Activated CD4-positive, alpha-beta T cell treated with anti-CD3 and anti-CD28 coated beads, Interleukin-2, amount 10 ng/mL, durations not matched to agents 24 days and 14 days (primary cell): ENCODE measurements at regions of chr6 and their contacts with region 1.

Region 1: DNA sequence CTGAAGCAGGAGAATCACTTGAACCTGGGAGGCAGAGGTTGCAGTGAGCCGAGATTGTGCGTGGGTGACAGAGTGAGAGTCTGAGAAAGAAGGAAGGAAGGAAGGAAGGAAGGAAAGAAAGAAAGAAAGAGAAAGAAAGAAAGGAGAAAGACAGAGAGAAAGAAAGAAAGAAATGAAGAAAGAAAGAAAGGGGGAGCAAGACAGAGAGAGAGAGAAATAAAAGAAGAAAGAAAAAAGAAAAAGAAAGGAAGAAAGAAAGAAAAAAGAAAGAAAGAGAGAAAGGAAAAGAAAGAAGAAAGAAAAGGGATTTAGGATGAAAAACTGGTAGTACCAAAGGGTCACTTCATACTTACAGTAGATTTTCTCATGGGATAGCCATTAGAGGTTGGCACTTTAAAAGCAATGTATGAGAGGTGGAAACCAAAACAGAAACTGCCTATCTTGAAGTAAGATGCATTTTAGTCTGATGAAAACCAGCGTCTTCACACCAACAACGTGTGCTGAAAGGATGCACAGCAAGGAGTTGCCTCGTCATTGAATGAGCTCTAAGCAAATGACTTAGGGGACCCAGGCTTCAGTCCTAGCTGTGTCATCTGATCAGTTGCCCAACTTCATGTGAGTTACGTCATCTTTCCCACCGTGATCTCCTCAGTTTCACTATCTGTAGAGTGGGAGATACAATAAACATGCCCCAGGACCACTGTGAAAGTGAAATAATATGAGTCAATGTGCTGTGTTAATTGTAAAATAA is 133.9 kb upstream of the NEDD9 start:
- DNase-seq: peak; percentile 86
- H3K4me3 Mint-ChIP-seq: peak overlapping the region; percentile 62
- H3K27ac Mint-ChIP-seq: peak overlapping the region; percentile 86
- H3K4me1 Mint-ChIP-seq: peaks cover 78% of the 10 kb centered on the region
- H3K27me3 Mint-ChIP-seq: no peaks in the 10 kb centered on the region

Region 2: DNA sequence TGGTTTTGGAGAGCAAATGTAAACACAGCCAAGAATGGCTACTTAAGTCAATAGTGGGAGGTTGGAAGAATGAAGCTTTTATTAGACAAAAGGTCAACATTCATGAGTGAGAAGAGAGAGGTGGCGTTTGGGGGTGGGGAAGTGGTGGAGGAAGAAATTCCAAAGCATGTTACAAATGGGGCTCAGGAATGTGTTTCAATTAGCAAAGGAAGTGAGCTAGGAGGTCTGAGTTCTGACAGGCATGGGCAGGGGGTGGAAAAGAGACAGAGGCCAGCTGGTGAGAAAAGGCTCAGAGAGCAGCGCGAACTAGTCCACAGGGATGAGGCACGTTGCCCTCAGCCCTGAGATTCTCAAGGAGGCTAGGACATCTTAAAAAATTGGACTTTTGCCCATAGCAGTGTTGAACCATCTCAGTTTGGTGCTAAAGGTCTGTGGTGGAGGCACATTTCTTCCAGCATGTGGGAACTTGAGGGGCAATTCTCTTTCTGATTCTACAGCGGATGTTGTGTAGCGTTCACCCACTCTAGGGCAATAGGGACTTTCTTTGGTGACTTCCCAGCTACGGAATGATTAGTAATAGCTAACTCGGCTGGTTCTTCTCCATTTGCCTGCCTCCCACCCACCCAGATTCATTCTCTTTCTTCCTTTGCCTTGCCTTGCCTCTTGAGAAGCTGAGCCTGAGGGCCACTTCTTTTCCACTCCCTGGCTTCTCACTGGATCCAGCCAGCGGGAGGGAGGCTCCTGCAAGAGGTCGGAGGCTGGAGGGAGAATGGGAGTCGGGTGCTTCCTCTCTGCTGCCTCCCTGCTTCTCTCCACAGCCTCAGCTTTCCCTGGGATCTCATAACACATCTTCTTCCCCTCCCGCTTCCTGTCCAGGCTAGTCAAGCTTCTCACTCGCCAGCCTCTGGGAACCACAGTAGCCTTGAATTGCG is 88.8 kb before region 1 on chr6:
- intact Hi-C with region 1: loop called (anchors 5 kb)
- DNase-seq: no peak
- H3K4me3 Mint-ChIP-seq: peak overlapping the region; percentile 31
- H3K27ac Mint-ChIP-seq: peak overlapping the region; percentile 89
- H3K4me1 Mint-ChIP-seq: peaks cover 37% of the 10 kb centered on the region
- H3K27me3 Mint-ChIP-seq: no peaks in the 10 kb centered on the region

Region 3: GRCh38 chr6:11324453-11325015 is 41.8 kb before region 1 on chr6:
- intact Hi-C with region 1: loop called (anchors 1 kb)
- DNase-seq: peak; percentile 87
- H3K4me3 Mint-ChIP-seq: peak overlapping the region; percentile 78
- H3K27ac Mint-ChIP-seq: peak overlapping the region; percentile 97
- H3K4me1 Mint-ChIP-seq: peaks cover 75% of the 10 kb centered on the region
- H3K27me3 Mint-ChIP-seq: no peaks in the 10 kb centered on the region

Region 4: DNA sequence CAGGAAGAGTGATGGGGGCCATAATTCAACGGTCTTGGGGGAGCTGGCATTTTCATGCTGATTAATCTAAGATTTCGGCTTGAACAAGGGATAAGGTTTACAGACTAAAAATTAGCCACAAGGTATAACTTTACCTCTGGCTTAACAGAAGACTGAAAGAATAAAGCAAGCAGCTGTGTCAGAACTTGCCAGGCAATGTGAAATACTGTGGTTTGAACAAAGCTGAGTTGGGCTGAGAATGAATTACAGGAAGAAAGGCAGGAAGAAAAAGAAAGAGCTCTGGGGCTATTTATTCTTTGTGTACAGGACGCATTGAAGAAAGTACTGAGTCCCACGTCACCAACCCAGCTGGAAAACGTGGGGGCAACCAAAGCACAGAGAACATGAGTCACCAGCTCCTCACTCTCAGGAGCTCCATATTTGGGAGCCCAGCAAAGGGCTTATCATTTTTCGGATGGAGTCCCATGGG is 12.4 kb before region 1 on chr6:
- intact Hi-C with region 1: loop called (anchors 1 kb)
- DNase-seq: peak; percentile 87
- H3K4me3 Mint-ChIP-seq: peak overlapping the region; percentile 68
- H3K27ac Mint-ChIP-seq: peak overlapping the region; percentile 86
- H3K4me1 Mint-ChIP-seq: peaks cover 73% of the 10 kb centered on the region
- H3K27me3 Mint-ChIP-seq: no peaks in the 10 kb centered on the region

Region 5: DNA sequence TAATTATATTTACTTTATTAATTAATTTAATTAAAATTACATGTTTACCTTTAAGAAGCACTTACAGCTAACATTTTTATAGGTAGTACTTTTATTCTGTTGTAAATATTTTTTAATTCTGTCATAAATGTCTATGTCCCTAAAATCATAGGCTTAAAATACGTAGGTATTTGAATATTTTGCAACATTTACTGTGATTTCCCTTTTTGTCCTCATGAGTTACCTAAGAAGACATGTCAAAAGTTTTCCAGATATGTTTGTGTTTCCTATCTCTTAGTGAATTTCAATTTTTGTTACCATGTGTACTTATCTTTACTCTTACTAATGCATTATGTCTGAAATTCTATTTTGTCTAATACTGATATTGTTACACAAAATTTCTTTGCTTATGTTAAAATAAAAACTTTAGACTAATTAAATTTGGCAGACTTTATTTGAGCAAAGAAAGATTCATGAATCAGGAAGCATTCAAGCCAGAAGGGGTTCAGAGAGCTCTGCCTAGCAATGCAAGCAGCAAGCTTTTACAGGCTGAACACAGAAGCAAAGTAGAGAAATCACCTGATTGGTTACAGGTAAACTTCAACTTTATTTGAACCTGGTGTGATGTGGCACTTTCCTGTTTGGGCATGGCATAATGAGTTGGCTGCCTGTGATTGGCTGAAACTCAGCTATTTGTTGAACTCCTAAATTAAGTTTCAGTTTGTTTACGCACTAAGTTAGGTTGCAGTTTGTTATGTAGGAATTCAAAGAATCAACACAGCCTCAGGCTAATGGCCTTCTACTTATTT is 48.0 kb after region 1 on chr6:
- intact Hi-C with region 1: loop called (anchors 1 kb)
- DNase-seq: peak; percentile 78
- H3K4me3 Mint-ChIP-seq: no peak overlapping the region
- H3K27ac Mint-ChIP-seq: peak overlapping the region; percentile 41
- H3K4me1 Mint-ChIP-seq: peaks cover 44% of the 10 kb centered on the region
- H3K27me3 Mint-ChIP-seq: no peaks in the 10 kb centered on the region

Region 6: GRCh38 chr6:11496152-11497060 is 130.0 kb after region 1 on chr6:
- intact Hi-C with region 1: loop called (anchors 5 kb)
- DNase-seq: peak; percentile 93
- H3K4me3 Mint-ChIP-seq: no peak overlapping the region
- H3K27ac Mint-ChIP-seq: no peak overlapping the region
- H3K4me1 Mint-ChIP-seq: peaks cover 10% of the 10 kb centered on the region
- H3K27me3 Mint-ChIP-seq: no peaks in the 10 kb centered on the region

Region 7: DNA sequence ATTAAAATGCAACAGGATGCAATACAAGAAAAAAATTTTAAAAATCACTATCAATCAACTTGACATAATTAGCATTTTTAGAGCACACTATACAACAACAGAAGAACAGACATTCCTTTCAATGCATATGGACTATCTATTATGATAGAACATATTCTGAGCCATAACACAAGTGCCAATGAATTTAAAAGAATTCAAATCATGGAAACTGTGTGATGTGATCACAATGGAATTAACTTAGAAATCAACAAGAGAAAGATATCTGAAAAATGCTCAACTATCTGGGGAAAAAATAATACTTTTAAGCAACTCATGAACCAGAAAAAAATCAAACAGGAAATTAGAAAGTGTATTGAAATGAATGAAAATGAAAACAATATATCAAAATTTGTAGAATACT is 305.9 kb after region 1 on chr6:
- intact Hi-C with region 1: no loop called
- DNase-seq: no peak
- H3K4me3 Mint-ChIP-seq: no peak overlapping the region
- H3K27ac Mint-ChIP-seq: no peak overlapping the region
- H3K4me1 Mint-ChIP-seq: peaks cover 3% of the 10 kb centered on the region
- H3K27me3 Mint-ChIP-seq: peaks cover 9% of the 10 kb centered on the region